CD14-positive monocyte (primary cell): ENCODE measurements at regions of chr2 and their contacts with region 1.

Region 1: DNA sequence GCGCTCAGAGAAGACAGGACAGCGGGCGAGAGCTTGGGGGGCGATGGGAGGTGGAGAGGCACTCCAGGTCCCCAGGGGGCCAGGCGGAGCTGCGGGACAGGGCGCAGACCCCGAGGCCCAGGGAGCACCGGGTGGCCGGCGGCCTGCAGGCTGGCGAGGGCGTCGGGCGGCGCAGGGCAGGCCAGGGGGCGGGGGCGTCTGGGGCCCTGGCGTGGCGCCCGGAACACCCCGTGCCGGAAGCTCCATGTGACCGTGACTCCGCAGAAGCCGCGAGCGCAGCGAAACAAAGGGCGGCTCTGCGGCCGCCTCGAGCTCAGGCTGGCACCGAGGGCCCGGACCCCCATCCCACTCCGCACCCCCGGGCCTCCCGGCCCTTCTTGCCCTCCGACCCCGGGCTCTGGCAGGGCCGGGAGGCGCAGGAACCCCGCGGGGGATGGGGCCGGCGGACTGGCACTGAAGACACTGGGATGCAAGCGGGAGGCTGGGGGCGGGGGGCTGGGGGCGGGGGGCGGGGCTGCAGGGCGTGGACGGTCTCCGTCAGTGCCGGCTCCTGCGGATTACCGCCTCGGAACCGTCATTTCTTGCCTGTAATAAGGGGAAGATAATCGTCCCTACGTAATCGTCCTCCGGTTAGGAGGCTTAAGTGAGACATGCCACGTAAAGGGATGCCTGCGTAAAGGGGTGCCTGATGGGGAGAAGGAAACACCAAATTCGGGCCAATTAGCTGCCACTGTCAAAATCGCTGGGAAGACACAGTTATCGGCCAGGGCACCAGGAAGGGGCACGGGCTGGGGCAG is 19.2 kb downstream of the SH2D6 start:
- DNase-seq: peak; percentile 96
- H3K4me3 ChIP-seq: peak overlapping the region in 2 of 3 experiments; percentile 12 to 38
- H3K4me3 Mint-ChIP-seq: peak overlapping the region; percentile 68 to 76
- H3K27ac ChIP-seq: peak overlapping the region; percentile 92 to 98
- H3K27ac Mint-ChIP-seq: peak overlapping the region; percentile 98 to 100 (median 99)
- H3K4me1 ChIP-seq: peaks cover 57 to 66% of the 10 kb centered on the region in 2 donors
- H3K4me1 Mint-ChIP-seq: peaks cover 59% of the 10 kb centered on the region
- H3K27me3 ChIP-seq: no peaks in the 10 kb centered on the region
- H3K27me3 Mint-ChIP-seq: peaks cover 0 to 7% (median 2%) of the 10 kb centered on the region in 3 donors
- CTCF ChIP-seq: no peak

Region 2: GRCh38 chr2:85496436-85496835 is 58.8 kb after region 1 on chr2:
- intact Hi-C with region 1: loop called in 1 of 2 experiments (anchors 5 kb)
- DNase-seq: no peak
- H3K4me3 ChIP-seq: no peak overlapping the region
- H3K4me3 Mint-ChIP-seq: no peak overlapping the region
- H3K27ac ChIP-seq: no peak overlapping the region
- H3K27ac Mint-ChIP-seq: no peak overlapping the region
- H3K4me1 ChIP-seq: peaks cover 31 to 35% of the 10 kb centered on the region in 2 donors
- H3K4me1 Mint-ChIP-seq: peaks cover 42% of the 10 kb centered on the region
- H3K27me3 ChIP-seq: no peaks in the 10 kb centered on the region
- H3K27me3 Mint-ChIP-seq: peaks cover 0 to 3% (median 0%) of the 10 kb centered on the region in 3 donors
- CTCF ChIP-seq: no peak